ENCODE measurements at regions of chr1 and their contacts with region 1.

Region 1: GRCh38 chr1:44036409-44037139 is 5.3 kb upstream of the SLC6A9 start:
- H3K4me3 ChIP-seq: no peak overlapping the region
- H3K27ac ChIP-seq: no peak overlapping the region; the same call in 1 of the 2 replicates
- H3K4me1 ChIP-seq: peaks cover 3% of the 10 kb centered on the region; the same call in 1 of the 2 replicates
- CTCF ChIP-seq: peak; percentile 50

Region 2: DNA sequence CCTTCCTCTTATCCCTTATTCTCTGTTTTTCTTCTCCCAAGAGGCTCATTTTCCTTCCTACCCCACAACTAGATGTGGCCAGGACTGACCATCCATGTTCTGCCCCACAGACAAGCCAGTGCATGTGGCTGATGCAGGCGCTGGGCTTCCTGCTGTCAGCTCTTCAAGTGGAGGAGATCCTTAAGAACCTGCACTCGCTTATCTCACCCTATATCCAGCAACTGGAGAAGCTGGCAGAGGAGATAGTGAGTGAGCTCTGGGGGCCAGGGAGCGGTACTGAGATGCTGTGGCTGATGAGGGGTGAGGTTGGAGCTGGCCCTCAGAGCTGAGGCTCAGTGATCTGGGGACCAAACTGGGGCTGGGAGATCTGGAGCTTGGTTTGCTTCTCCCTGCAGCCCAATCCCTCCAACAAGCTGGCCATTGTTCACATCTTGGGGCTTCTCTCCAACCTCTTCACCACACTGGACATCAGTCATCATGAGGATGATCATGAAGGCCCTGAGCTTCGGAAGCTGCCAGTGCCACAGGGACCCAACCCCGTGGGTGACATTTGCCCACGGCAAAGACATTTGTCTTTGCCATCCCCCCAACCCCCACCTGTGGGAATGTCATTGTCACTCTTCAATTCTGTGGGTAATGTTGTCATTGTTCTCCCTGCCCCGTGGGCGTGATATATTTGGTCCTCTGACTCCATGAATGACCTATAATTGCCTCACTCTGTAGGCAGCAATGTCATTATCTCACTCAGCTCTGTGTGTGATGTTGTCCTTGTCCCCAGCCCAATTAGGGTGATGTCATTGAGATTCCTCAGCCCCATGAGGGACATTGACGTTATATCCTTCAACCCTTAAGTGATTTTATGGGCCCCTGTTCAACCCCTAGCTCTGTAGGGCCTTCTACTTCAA is 78.0 kb before region 1 on chr1:
- CTCF ChIA-PET with region 1: no interaction called
- POLR2A ChIA-PET with region 1: no interaction called
- H3K4me3 ChIP-seq: no peak overlapping the region
- H3K27ac ChIP-seq: no peak overlapping the region
- H3K4me1 ChIP-seq: no peaks in the 10 kb centered on the region
- CTCF ChIP-seq: no peak

Region 3: DNA sequence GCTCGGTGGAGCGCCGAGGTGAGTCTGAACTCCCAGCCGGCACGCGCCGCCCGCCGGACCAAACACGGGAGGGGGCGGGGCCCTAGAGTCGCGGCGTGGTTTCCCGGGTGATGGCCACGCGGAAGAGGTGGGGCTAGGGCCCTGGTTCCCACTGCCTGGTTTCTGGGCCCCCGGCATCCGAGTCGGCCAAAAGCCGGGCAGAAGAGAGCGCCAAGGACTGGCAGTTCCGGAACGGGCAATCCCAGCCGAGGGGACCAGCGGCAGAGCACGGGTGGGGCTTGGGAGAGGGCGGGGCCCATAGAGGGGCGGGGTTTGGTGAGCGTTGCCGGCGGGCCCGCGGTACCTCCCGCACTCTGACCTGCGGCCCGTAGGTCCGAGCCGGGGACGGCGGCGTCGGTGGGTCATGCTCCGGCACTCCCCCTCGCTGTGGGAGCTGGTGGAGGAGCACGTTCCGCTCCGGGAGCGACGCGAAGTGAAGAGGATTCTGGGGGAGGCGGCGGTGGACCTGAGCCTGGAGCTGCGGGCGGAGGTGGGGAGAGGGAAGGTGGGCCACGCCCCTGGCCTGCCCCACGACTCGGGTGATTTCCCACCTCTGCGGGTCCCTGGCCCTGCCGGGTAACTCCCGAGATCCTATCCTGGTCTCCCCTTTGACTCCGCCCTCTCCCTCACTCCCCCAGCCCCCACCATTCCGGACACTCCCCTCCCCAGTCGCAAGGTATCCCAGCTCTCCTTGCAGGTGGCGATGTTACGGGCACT is 44.9 kb before region 1 on chr1 and contains the start of gene CCDC24:
- CTCF ChIA-PET with region 1: interaction called, 12 read pairs
- POLR2A ChIA-PET with region 1: interaction called, 4 read pairs
- H3K4me3 ChIP-seq: peak within 1 kb of the TSS; percentile 72
- H3K27ac ChIP-seq: peak within 1 kb of the TSS; percentile 39; the same call in 1 of the 2 replicates
- H3K4me1 ChIP-seq: no peaks in the 10 kb centered on the region
- CTCF ChIP-seq: 0 out of 2 replicates have a peak, but pooled peaks have one; percentile 25

Region 4: DNA sequence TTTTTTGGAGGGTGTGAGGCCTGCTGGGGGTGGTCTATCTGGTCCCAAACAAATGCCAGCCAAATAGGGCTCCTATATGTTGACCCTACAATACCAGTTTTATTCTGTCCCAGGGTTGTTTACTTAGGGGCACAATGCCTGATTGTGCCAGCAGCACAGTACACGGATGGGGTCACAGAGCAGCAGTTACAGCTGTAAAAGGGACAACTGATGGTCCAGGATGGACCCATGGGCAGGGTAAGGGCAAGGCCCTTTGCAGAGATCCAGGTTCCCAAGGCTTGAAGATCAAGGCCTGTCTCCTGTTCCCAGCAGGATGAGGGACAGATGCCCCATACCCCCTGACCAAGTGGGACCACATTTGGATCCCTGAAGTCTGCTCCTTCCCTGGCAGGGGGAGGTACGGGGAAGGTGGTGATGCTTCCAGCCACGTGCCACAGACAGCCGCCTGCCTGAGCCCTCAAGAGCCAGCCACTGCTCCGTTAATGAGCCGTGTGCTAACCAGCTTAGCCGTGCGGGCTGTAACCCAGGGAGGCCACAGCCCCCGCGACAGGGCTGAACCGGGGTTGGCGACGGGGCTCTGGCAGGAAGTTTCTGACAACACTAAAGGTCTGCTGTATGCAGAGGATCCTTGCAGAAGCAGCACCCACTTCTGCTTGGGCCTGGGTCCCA is 23.5 kb before region 1 on chr1:
- CTCF ChIA-PET with region 1: interaction called, 20 read pairs
- POLR2A ChIA-PET with region 1: interaction called, 4 read pairs
- H3K4me3 ChIP-seq: no peak overlapping the region
- H3K27ac ChIP-seq: no peak overlapping the region
- H3K4me1 ChIP-seq: no peaks in the 10 kb centered on the region
- CTCF ChIP-seq: no peak

Region 5: DNA sequence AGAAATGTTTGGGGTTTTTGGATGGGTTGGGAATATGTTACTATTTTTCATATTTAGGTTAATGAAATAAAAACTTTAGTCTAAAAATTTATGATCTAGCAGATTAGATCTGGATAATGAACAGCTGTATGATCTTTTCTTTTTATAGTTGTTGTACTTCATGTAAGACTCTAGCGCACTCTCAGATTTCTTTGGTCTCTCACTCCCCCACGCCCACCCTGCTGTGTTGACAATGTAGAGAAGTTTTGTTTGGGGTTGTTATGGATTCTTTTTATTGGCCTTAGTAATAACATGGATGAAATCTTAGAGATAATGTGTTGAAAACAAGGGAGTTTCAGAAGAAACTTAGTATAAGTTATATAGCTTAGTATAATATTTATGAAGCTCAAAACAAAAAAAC is 99.3 kb after region 1 on chr1:
- CTCF ChIA-PET with region 1: no interaction called
- POLR2A ChIA-PET with region 1: no interaction called
- H3K4me3 ChIP-seq: no peak overlapping the region
- H3K27ac ChIP-seq: no peak overlapping the region
- H3K4me1 ChIP-seq: peaks cover 2% of the 10 kb centered on the region; the same call in 1 of the 2 replicates
- CTCF ChIP-seq: no peak